ENCODE measurements at regions of chr11 and their contacts with region 1.

Region 1: DNA sequence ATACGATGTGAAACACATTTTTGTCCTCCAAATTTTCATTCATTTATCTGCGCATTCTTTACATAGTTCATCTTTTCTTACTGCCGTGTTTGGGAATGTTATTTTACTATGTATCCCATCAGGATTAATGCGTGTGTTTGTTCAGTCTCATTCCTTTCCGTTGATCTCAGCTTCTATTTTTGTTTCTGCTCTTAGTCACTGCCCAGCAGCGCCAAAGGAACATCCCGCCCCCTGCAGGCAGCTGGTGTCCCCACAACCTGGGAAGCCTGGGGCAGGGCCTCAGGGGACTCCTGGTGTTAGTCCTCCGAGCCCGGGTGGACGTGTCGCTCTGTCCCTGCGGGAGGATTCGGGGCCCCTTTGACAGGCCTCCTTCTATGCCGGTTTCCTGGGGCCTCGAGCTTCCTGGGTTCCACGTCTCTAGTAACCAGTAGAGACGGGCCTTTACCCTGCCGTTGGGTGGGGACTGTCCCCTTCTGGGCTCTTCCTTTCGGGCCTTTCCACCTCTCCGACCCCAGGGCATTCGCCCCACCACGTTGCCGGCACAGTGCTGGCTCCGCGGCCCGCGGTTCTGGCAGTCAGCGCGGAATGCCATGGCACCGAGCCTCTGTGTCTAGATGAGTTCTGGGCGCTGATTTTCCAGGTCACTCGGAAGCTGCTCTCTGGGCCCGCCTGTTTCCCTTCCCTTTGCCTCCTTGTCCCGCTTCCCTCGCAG is 39.8 kb downstream of the WEE1 start:
- DNase-seq: peak; percentile 97 to 99
- H3K4me3 ChIP-seq: peak overlapping the region; percentile 43
- H3K4me3 Mint-ChIP-seq: peak overlapping the region; percentile 93
- H3K27ac Mint-ChIP-seq: peak overlapping the region; percentile 98
- H3K4me1 ChIP-seq: peaks cover 33% of the 10 kb centered on the region
- H3K4me1 Mint-ChIP-seq: peaks cover 37% of the 10 kb centered on the region
- H3K27me3 ChIP-seq: no peaks in the 10 kb centered on the region
- H3K27me3 Mint-ChIP-seq: no peaks in the 10 kb centered on the region
- CTCF ChIP-seq: peak; percentile 86 to 98

Region 2: GRCh38 chr11:9460322-9461067 is 152.8 kb before region 1 on chr11 and contains the start of gene ZNF143:
- CTCF ChIA-PET with region 1: interaction called, 4 read pairs
- POLR2A ChIA-PET with region 1: interaction called, 4 read pairs
- intact Hi-C with region 1: loop called (anchors 1 kb)
- DNase-seq: peak; percentile 100
- H3K4me3 ChIP-seq: peak within 1 kb of the TSS; percentile 83
- H3K4me3 Mint-ChIP-seq: peak within 1 kb of the TSS; percentile 96
- H3K27ac Mint-ChIP-seq: peak within 1 kb of the TSS; percentile 99
- H3K4me1 ChIP-seq: peaks cover 17% of the 10 kb centered on the region
- H3K4me1 Mint-ChIP-seq: peaks cover 7% of the 10 kb centered on the region
- H3K27me3 ChIP-seq: no peaks in the 10 kb centered on the region
- H3K27me3 Mint-ChIP-seq: no peaks in the 10 kb centered on the region
- CTCF ChIP-seq: no peak
- total RNA-seq, gene ZNF143: 27.2 and 31.2 TPM in 2 replicates

Region 3: GRCh38 chr11:9573052-9573774 is 40.1 kb before region 1 on chr11 and contains the start of gene WEE1:
- CTCF ChIA-PET with region 1: interaction called, 12 read pairs
- POLR2A ChIA-PET with region 1: interaction called, 18 read pairs
- intact Hi-C with region 1: loop called (anchors 1 kb)
- DNase-seq: peak; percentile 99 to 100
- H3K4me3 ChIP-seq: peak within 1 kb of the TSS; percentile 87
- H3K4me3 Mint-ChIP-seq: peak within 1 kb of the TSS; percentile 94
- H3K27ac Mint-ChIP-seq: peak within 1 kb of the TSS; percentile 100
- H3K4me1 ChIP-seq: peaks cover 40% of the 10 kb centered on the region
- H3K4me1 Mint-ChIP-seq: peaks cover 37% of the 10 kb centered on the region
- H3K27me3 ChIP-seq: no peaks in the 10 kb centered on the region
- H3K27me3 Mint-ChIP-seq: no peaks in the 10 kb centered on the region
- CTCF ChIP-seq: no peak
- total RNA-seq, gene WEE1: 108 and 116 TPM in 2 replicates

Region 4: DNA sequence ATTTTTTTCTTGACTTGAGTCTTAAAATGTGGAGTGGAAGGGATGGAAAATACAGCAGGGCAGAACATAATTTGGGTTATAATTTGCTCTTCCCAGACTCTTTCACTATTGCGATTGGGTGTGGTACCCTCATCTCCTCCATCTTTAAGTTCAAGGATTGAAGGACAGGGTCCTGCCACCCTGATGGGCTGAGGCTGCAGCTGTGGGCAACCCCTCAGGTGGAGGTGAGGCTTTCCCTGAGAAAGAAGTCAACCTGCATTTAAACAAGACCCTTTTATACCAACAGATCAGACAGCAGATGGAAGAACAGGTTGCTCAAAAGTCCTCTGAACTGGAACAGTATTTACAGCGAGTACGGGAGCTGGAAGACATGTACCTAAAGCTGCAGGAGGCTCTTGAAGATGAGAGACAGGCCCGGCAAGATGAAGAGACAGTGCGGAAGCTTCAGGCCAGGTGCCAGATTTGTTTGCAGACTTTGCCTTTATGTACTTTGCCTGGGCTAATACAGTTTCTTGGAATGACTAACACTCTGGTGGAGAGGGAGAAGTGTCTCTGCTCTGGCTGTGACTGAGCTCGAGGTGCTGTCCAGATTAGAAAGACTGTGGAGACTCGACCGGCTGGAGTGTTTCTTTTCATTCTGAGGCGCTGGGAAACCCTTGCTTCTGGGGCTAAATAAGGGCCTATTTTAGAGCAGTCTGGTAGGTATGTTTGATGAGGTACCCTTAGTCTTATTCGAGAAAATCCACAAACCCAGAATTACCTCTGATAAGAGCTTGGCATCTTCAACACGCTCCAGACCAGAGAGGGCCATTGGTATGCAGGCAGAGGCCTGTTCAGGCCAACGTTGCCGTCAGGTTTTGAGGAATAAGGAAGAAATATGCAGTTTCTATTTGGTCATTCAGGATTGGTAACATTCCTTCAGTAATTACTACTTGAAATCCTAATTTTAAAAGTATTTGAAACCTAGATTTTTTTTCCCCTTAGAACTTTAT is 126.9 kb after region 1 on chr11:
- CTCF ChIA-PET with region 1: interaction called, 4 read pairs
- POLR2A ChIA-PET with region 1: no interaction called
- intact Hi-C with region 1: loop called (anchors 2 kb)
- DNase-seq: peak; percentile 64 to 65
- H3K4me3 ChIP-seq: no peak overlapping the region
- H3K4me3 Mint-ChIP-seq: peak overlapping the region; percentile 19
- H3K27ac Mint-ChIP-seq: peak overlapping the region; percentile 63
- H3K4me1 ChIP-seq: peaks cover 27% of the 10 kb centered on the region
- H3K4me1 Mint-ChIP-seq: peaks cover 32% of the 10 kb centered on the region
- H3K27me3 ChIP-seq: no peaks in the 10 kb centered on the region
- H3K27me3 Mint-ChIP-seq: no peaks in the 10 kb centered on the region
- CTCF ChIP-seq: no peak

Region 5: DNA sequence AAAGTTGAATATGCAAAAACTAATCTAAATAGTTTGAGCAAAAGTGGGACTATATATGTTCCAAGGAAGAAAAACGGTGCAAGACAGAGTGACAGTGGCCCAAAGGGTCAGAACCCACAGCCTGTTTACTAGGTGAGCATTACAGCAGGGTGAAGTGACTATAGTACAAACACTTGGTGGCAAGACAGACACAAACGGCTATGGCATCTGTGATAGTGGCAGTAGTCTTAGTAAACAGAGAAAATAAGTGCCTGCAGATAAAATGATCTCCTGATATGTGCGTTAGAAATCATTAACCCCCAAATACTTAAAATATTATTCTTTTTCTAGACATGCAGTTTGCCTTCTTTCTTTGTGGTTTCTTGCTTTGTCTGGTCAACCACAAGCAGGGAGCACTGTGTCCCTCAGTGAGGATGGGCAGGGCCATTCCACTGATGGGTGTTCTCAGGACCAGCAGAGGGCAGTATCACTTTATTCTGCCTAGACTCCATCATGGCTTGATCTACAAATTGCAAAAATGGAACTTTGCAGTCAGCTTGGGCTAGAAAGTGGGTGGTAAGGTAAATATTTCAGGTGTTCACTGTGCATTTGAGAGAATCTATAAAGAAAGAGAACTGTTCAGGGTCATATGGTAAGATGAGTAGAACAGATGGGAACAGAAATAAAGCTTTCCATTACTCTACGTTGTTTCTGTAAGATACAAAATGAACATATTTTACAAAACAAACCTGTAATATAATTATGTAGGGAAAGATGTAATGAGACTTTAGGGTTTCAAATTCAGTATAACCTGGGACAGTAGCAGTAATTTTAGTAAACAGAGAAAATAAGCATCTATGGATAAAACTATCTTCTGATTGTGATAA is 248.8 kb after region 1 on chr11:
- CTCF ChIA-PET with region 1: no interaction called
- POLR2A ChIA-PET with region 1: no interaction called
- intact Hi-C with region 1: no loop called
- DNase-seq: peak; percentile 77 to 82
- H3K4me3 ChIP-seq: no peak overlapping the region
- H3K4me3 Mint-ChIP-seq: no peak overlapping the region
- H3K27ac Mint-ChIP-seq: no peak overlapping the region
- H3K4me1 ChIP-seq: peaks cover 60% of the 10 kb centered on the region
- H3K4me1 Mint-ChIP-seq: peaks cover 41% of the 10 kb centered on the region
- H3K27me3 ChIP-seq: no peaks in the 10 kb centered on the region
- H3K27me3 Mint-ChIP-seq: no peaks in the 10 kb centered on the region
- CTCF ChIP-seq: peak; percentile 77 to 87

Region 6: DNA sequence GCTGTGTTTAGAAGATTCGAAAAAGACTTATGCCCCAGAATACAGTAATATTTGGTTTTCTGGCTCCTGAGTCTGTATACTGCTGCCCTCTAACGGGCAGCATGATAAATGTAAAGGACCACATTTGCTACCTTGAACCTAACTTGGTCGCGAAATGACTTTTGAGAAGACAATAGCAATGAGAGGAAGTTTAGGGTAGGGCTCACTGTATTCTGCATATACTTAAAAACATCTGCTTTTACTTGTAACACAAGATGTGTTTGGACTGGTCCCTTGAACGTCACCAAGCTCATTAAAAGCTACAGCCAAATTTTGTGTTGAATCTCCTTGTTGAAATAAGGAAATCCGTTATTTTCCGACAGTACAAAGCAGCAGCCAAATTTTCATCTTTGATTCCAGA is 359.7 kb after region 1 on chr11:
- CTCF ChIA-PET with region 1: no interaction called
- POLR2A ChIA-PET with region 1: no interaction called
- intact Hi-C with region 1: loop called (anchors 10 kb)
- DNase-seq: peak in 1 of 2 experiments; percentile 41
- H3K4me3 ChIP-seq: no peak overlapping the region
- H3K4me3 Mint-ChIP-seq: no peak overlapping the region
- H3K27ac Mint-ChIP-seq: no peak overlapping the region
- H3K4me1 ChIP-seq: peaks cover 18% of the 10 kb centered on the region
- H3K4me1 Mint-ChIP-seq: peaks cover 6% of the 10 kb centered on the region
- H3K27me3 ChIP-seq: no peaks in the 10 kb centered on the region
- H3K27me3 Mint-ChIP-seq: no peaks in the 10 kb centered on the region
- CTCF ChIP-seq: peak; percentile 62 to 82

Measured in Caco-2 (cell line).